ENCODE measurements at regions of chr2 and their contacts with region 1.

Region 1: DNA sequence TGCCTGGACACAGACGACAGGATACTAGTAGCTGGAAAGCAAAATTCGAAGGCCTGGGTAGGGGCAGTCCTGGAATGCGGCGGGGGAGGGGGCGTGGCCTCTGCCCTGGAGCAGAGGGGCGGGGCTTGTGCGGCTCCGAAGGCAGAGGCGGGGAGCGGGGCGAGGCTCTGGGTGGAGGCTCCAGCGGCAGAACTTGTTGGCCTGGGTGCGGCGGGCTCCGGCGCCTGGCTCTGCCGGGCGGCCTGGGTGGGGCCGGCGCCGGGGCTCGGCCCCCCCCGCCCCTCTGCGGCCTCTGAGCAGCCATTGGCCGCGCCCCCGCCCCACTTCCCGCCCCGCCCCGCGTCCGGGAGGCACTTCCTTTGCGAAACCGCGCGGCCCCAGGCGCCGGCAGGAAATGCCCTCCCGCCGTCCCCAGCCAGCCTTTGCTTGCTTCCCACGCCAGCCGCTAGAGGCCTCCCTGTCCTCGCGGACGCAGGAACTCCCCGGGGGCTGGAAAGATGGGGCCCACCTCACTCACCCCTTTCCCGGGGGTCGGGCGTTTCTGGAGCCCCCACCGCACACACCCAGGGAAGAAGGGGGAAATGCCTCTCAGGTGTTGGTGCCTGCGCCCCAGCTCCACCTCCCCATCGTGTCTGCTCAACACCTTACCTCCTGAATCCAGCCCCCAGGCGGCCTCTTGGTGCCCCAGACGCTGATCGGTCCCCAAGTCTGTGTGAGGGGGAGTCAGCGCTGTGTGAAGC is 6.7 kb downstream of the CTDSP1 start:
- DNase-seq: peak; percentile 79 to 98 (median 95)
- ATAC-seq: peak; percentile 68
- H3K4me3 ChIP-seq: peak overlapping the region; percentile 52 to 63
- H3K4me3 Mint-ChIP-seq: peak overlapping the region; percentile 82
- H3K27ac ChIP-seq: peak overlapping the region; percentile 56 to 73
- H3K27ac Mint-ChIP-seq: peak overlapping the region; percentile 94
- H3K4me1 ChIP-seq: peaks cover 49% of the 10 kb centered on the region
- H3K4me1 Mint-ChIP-seq: peaks cover 56% of the 10 kb centered on the region
- H3K27me3 ChIP-seq: no peaks in the 10 kb centered on the region
- H3K27me3 Mint-ChIP-seq: peaks cover 2% of the 10 kb centered on the region
- CTCF ChIP-seq: peak; percentile 59

Region 2: GRCh38 chr2:218466016-218466521 is 59.7 kb after region 1 on chr2:
- CTCF ChIA-PET with region 1: interaction called, 4 read pairs
- POLR2A ChIA-PET with region 1: interaction called, 3 read pairs
- intact Hi-C with region 1: loop called (anchors 1 kb)
- DNase-seq: peak in 2 of 9 experiments; percentile 21 to 46
- ATAC-seq: peak; percentile 26
- H3K4me3 ChIP-seq: no peak overlapping the region
- H3K4me3 Mint-ChIP-seq: no peak overlapping the region
- H3K27ac ChIP-seq: no peak overlapping the region
- H3K27ac Mint-ChIP-seq: no peak overlapping the region
- H3K4me1 ChIP-seq: no peaks in the 10 kb centered on the region
- H3K4me1 Mint-ChIP-seq: peaks cover 11% of the 10 kb centered on the region
- H3K27me3 ChIP-seq: no peaks in the 10 kb centered on the region
- H3K27me3 Mint-ChIP-seq: no peaks in the 10 kb centered on the region
- CTCF ChIP-seq: peak; percentile 52

Region 3: GRCh38 chr2:218516614-218517013 is 110.2 kb after region 1 on chr2:
- CTCF ChIA-PET with region 1: interaction called, 5 read pairs
- POLR2A ChIA-PET with region 1: no interaction called
- intact Hi-C with region 1: loop called (anchors 1 kb)
- DNase-seq: peak in 4 of 9 experiments; percentile 8 to 68 (median 39)
- ATAC-seq: peak; percentile 57
- H3K4me3 ChIP-seq: no peak overlapping the region
- H3K4me3 Mint-ChIP-seq: no peak overlapping the region
- H3K27ac ChIP-seq: no peak overlapping the region
- H3K27ac Mint-ChIP-seq: no peak overlapping the region
- H3K4me1 ChIP-seq: no peaks in the 10 kb centered on the region
- H3K4me1 Mint-ChIP-seq: peaks cover 2% of the 10 kb centered on the region
- H3K27me3 ChIP-seq: no peaks in the 10 kb centered on the region
- H3K27me3 Mint-ChIP-seq: no peaks in the 10 kb centered on the region
- CTCF ChIP-seq: peak; percentile 40

Region 4: DNA sequence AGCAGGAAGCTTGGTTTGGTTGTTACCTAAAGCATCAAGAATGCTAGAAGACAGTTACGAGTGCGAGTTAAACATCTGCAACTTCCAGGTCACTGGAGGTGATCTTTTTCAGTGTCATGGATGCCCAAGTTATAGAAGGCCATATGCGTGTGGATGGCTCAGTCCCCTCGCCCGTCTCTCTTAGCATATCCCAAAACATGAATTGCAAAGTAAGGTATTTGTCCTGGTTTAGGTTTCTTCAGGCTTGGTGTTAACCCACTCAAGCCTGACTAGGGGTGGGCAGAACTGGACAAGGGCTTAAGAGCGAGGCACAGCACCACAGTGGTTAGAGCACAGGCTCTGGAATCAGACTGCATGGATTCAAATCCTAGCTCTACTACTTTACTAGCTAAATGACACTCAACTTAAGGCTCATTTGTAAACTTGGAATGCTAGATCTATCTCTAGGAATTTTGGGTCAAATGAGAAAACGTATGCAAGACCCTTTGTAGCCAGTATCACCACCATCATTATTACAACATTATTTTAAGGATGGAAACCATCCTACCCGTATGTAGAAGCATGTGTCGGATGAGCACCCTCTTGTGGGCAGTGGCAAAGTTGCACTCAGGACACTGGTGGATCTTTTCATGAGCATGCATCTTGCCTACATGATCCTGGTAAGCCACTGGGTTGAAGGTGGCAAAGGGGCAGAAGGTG is 241.9 kb after region 1 on chr2:
- CTCF ChIA-PET with region 1: interaction called, 5 read pairs
- POLR2A ChIA-PET with region 1: no interaction called
- intact Hi-C with region 1: loop called (anchors 1 kb)
- DNase-seq: peak; percentile 24 to 72 (median 54)
- ATAC-seq: peak; percentile 95
- H3K4me3 ChIP-seq: no peak overlapping the region
- H3K4me3 Mint-ChIP-seq: no peak overlapping the region
- H3K27ac ChIP-seq: no peak overlapping the region
- H3K27ac Mint-ChIP-seq: no peak overlapping the region
- H3K4me1 ChIP-seq: peaks cover 5% of the 10 kb centered on the region
- H3K4me1 Mint-ChIP-seq: peaks cover 15% of the 10 kb centered on the region
- H3K27me3 ChIP-seq: no peaks in the 10 kb centered on the region
- H3K27me3 Mint-ChIP-seq: no peaks in the 10 kb centered on the region
- CTCF ChIP-seq: peak; percentile 79

Region 5: GRCh38 chr2:218671654-218672566 is 265.5 kb after region 1 on chr2 and contains the starts of genes RNF25 and STK36:
- CTCF ChIA-PET with region 1: no interaction called
- POLR2A ChIA-PET with region 1: no interaction called
- intact Hi-C with region 1: loop called in 1 of 2 experiments (anchors 1 kb)
- DNase-seq: peak; percentile 56 to 90 (median 82)
- ATAC-seq: peak; percentile 92
- H3K4me3 ChIP-seq: peak within 1 kb of the TSS; percentile 80 to 86
- H3K4me3 Mint-ChIP-seq: peak within 1 kb of the TSS; percentile 97
- H3K27ac ChIP-seq: peak within 1 kb of the TSS; percentile 74 to 83
- H3K27ac Mint-ChIP-seq: peak within 1 kb of the TSS; percentile 96
- H3K4me1 ChIP-seq: peaks cover 16% of the 10 kb centered on the region
- H3K4me1 Mint-ChIP-seq: peaks cover 25% of the 10 kb centered on the region
- H3K27me3 ChIP-seq: no peaks in the 10 kb centered on the region
- H3K27me3 Mint-ChIP-seq: no peaks in the 10 kb centered on the region
- CTCF ChIP-seq: no peak
- total RNA-seq, gene RNF25: 26.0 to 29.3 TPM
- total RNA-seq, gene STK36: 7.5 to 8.1 TPM

Region 6: DNA sequence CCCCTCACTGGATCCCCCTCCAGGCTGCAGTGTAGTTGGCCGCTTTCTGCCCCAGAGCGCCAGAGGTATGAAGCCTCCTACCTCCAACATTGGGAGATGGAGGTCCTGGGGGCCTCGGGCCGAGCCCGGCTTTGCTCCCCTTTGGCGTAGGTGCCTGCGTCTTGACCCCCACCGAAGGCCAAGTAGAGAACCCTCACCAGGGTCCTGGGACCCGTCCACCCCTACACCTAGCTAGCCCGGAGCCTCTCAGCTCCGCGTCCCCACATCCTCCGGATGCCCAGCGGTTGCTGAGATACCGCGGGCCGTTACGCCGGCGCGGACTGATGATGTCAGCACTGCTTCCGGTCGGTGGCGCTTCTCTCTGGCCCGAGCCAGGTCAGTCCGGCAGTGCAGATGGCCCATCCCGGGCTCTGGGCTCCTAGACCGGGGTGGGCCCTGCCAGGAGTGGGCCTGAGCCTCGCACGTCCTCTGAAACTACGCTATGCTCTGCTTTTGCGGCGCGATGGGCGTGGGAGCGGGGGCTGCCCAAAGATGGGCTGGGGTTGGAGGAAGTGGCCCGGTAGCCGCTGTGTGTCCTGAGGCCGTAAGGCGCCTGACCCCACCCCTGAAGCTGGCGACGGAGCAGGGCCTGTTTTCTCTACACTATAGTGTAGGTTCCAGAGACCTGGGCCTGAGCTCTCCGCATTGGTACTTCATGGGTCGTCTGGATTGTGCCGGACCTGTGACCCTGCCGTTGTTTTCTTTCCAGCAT is 838.9 kb after region 1 on chr2 and contains the starts of genes GLB1L and STK16:
- CTCF ChIA-PET with region 1: no interaction called
- POLR2A ChIA-PET with region 1: no interaction called
- intact Hi-C with region 1: loop called in 1 of 2 experiments (anchors 10 kb)
- DNase-seq: peak; percentile 67 to 94 (median 87)
- ATAC-seq: peak; percentile 37
- H3K4me3 ChIP-seq: peak within 1 kb of the TSS; percentile 68 to 94
- H3K4me3 Mint-ChIP-seq: peak within 1 kb of the TSS; percentile 94
- H3K27ac ChIP-seq: peak within 1 kb of the TSS; percentile 89 to 96
- H3K27ac Mint-ChIP-seq: peak within 1 kb of the TSS; percentile 99
- H3K4me1 ChIP-seq: peaks cover 58% of the 10 kb centered on the region
- H3K4me1 Mint-ChIP-seq: peaks cover 68% of the 10 kb centered on the region
- H3K27me3 ChIP-seq: no peaks in the 10 kb centered on the region
- H3K27me3 Mint-ChIP-seq: no peaks in the 10 kb centered on the region
- CTCF ChIP-seq: no peak
- total RNA-seq, gene GLB1L: 1.7 to 2.8 TPM
- total RNA-seq, gene STK16: 12.9 to 13.2 TPM

Region 7: GRCh38 chr2:219552382-219553167 is 1146.2 kb after region 1 on chr2:
- CTCF ChIA-PET with region 1: no interaction called
- POLR2A ChIA-PET with region 1: no interaction called
- intact Hi-C with region 1: loop called in 1 of 2 experiments (anchors 10 kb)
- DNase-seq: peak; percentile 58 to 89 (median 80)
- ATAC-seq: peak; percentile 90
- H3K4me3 ChIP-seq: peak overlapping the region; percentile 49 to 67
- H3K4me3 Mint-ChIP-seq: peak overlapping the region; percentile 79
- H3K27ac ChIP-seq: no peak overlapping the region
- H3K27ac Mint-ChIP-seq: no peak overlapping the region
- H3K4me1 ChIP-seq: peaks cover 17% of the 10 kb centered on the region
- H3K4me1 Mint-ChIP-seq: peaks cover 12% of the 10 kb centered on the region
- H3K27me3 ChIP-seq: peaks cover 18 to 22% of the 10 kb centered on the region in 2 experiments
- H3K27me3 Mint-ChIP-seq: peaks cover 49% of the 10 kb centered on the region
- CTCF ChIP-seq: no peak

Measured in CD8-positive, alpha-beta T cell (primary cell).